CD4-positive, alpha-beta T cell (primary cell): ENCODE measurements at regions of chr17 and their contacts with region 1.

Region 1: GRCh38 chr17:76264755-76265596 is at the start of gene UBALD2:
- DNase-seq: peak; percentile 96 to 99 (median 98)
- ATAC-seq: peak; percentile 80
- H3K4me3 ChIP-seq: peak within 1 kb of the TSS; percentile 73
- H3K4me3 Mint-ChIP-seq: peak within 1 kb of the TSS; percentile 93
- H3K27ac ChIP-seq: peak within 1 kb of the TSS; percentile 77 to 91
- H3K27ac Mint-ChIP-seq: peak within 1 kb of the TSS; percentile 98
- H3K4me1 ChIP-seq: peaks cover 70% of the 10 kb centered on the region
- H3K4me1 Mint-ChIP-seq: peaks cover 64% of the 10 kb centered on the region
- H3K27me3 ChIP-seq: no peaks in the 10 kb centered on the region
- H3K27me3 Mint-ChIP-seq: no peaks in the 10 kb centered on the region
- CTCF ChIP-seq: no peak
- total RNA-seq, gene UBALD2: 253 to 265 TPM

Region 2: DNA sequence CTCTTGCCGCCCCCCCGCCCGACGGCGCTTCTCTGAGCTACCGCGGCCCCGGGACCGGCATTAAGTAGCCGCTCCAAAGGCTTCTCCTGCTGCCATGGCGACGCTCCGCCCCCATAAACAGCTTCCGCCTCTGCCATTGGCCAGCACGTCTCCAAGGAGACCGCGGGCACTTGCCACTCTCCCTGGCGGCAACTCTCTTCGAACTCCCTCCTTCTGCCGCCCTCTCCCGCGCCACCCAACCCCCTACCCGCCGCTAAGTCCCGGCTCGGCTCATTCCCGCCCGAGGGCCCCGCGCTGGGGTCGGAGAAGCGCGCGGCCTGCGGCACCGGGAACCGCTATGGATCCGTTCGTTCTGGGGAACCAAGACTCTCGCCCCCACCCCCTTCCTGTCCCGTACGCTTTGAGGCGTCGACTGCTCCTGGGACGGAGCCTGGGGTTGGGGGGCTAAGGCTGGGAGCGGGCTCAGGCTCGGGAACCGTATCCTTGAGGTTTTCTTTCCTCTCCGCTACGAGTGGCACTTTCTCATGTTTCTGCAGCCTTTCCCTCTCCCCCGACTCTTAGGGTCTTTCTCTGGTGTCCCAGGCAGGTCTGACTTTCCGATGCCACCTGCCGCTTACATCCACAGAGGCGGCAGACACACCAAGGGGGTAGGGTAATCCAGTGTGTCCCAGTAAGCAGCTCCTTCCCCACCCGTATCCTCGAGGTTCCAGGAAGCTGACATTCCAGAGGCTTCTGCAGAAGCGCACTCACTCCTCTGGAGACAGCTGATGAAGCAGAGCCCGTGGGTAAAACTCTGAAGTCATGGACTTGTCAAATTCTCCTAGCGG is 123.6 kb before region 1 on chr17 and contains the start of gene FOXJ1:
- CTCF ChIA-PET with region 1: interaction called, 4 read pairs
- POLR2A ChIA-PET with region 1: interaction called, 20 read pairs
- intact Hi-C with region 1: loop called in 1 of 2 experiments (anchors 5 kb)
- DNase-seq: peak; percentile 83 to 97 (median 92)
- ATAC-seq: peak; percentile 64
- H3K4me3 ChIP-seq: peak within 1 kb of the TSS; percentile 51
- H3K4me3 Mint-ChIP-seq: peak within 1 kb of the TSS; percentile 87
- H3K27ac ChIP-seq: no peak within 1 kb of the TSS
- H3K27ac Mint-ChIP-seq: peak within 1 kb of the TSS; percentile 97
- H3K4me1 ChIP-seq: peaks cover 68% of the 10 kb centered on the region
- H3K4me1 Mint-ChIP-seq: peaks cover 60% of the 10 kb centered on the region
- H3K27me3 ChIP-seq: peaks cover 8 to 11% of the 10 kb centered on the region in 2 experiments
- H3K27me3 Mint-ChIP-seq: peaks cover 10% of the 10 kb centered on the region
- CTCF ChIP-seq: no peak
- total RNA-seq, gene FOXJ1: 0.63 to 0.89 TPM

Region 3: GRCh38 chr17:76153640-76154039 is 111.3 kb before region 1 on chr17:
- CTCF ChIA-PET with region 1: no interaction called
- POLR2A ChIA-PET with region 1: interaction called, 13 read pairs
- intact Hi-C with region 1: no loop called
- DNase-seq: no peak
- ATAC-seq: no peak
- H3K4me3 ChIP-seq: no peak overlapping the region
- H3K4me3 Mint-ChIP-seq: peak overlapping the region; percentile 30
- H3K27ac ChIP-seq: peak overlapping the region; percentile 24 to 72
- H3K27ac Mint-ChIP-seq: peak overlapping the region; percentile 99
- H3K4me1 ChIP-seq: peaks cover 35% of the 10 kb centered on the region
- H3K4me1 Mint-ChIP-seq: peaks cover 50% of the 10 kb centered on the region
- H3K27me3 ChIP-seq: no peaks in the 10 kb centered on the region
- H3K27me3 Mint-ChIP-seq: no peaks in the 10 kb centered on the region
- CTCF ChIP-seq: no peak

Region 4: DNA sequence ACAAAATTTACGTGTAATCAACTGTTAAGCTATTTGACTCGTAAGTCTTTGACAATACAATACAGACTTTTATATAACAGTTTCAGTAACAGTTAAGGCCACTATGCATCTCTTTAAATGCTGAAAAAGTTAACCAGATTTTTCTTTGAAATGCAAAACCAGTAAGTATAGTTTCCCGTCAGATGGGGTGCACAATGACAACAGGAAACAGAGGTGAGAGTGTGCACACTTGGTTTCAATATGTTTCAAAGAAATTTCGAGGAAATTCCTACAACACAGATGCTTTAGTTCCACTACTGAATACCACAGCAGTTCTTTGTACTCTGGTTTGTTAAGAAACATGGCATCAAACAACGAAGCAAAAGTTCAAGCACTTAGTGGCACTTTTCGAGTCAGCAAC is 73.1 kb before region 1 on chr17:
- CTCF ChIA-PET with region 1: interaction called, 7 read pairs
- POLR2A ChIA-PET with region 1: interaction called, 221 read pairs
- intact Hi-C with region 1: loop called in 1 of 2 experiments (anchors 1 kb)
- DNase-seq: peak in 7 of 14 experiments; percentile 26 to 92 (median 60)
- ATAC-seq: peak; percentile 81
- H3K4me3 ChIP-seq: peak overlapping the region; percentile 11
- H3K4me3 Mint-ChIP-seq: peak overlapping the region; percentile 65
- H3K27ac ChIP-seq: peak overlapping the region; percentile 73 to 79
- H3K27ac Mint-ChIP-seq: peak overlapping the region; percentile 93
- H3K4me1 ChIP-seq: peaks cover 93% of the 10 kb centered on the region
- H3K4me1 Mint-ChIP-seq: peaks cover 72% of the 10 kb centered on the region
- H3K27me3 ChIP-seq: no peaks in the 10 kb centered on the region
- H3K27me3 Mint-ChIP-seq: no peaks in the 10 kb centered on the region
- CTCF ChIP-seq: no peak

Region 5: GRCh38 chr17:76208120-76208519 is 56.9 kb before region 1 on chr17:
- CTCF ChIA-PET with region 1: no interaction called
- POLR2A ChIA-PET with region 1: interaction called, 19 read pairs
- intact Hi-C with region 1: no loop called
- DNase-seq: peak in 3 of 14 experiments; percentile 20 to 69 (median 22)
- ATAC-seq: peak; percentile 14
- H3K4me3 ChIP-seq: no peak overlapping the region
- H3K4me3 Mint-ChIP-seq: no peak overlapping the region
- H3K27ac ChIP-seq: peak overlapping the region in 1 of 2 donors; percentile 57
- H3K27ac Mint-ChIP-seq: peak overlapping the region; percentile 47
- H3K4me1 ChIP-seq: peaks cover 48% of the 10 kb centered on the region
- H3K4me1 Mint-ChIP-seq: peaks cover 42% of the 10 kb centered on the region
- H3K27me3 ChIP-seq: no peaks in the 10 kb centered on the region
- H3K27me3 Mint-ChIP-seq: no peaks in the 10 kb centered on the region
- CTCF ChIP-seq: no peak

Region 6: GRCh38 chr17:76252040-76252954 is 12.7 kb before region 1 on chr17:
- CTCF ChIA-PET with region 1: interaction called, 3 read pairs
- POLR2A ChIA-PET with region 1: interaction called, 394 read pairs
- intact Hi-C with region 1: no loop called
- DNase-seq: peak in 7 of 14 experiments; percentile 26 to 80 (median 63)
- ATAC-seq: peak; percentile 76
- H3K4me3 ChIP-seq: peak overlapping the region; percentile 6
- H3K4me3 Mint-ChIP-seq: peak overlapping the region; percentile 79
- H3K27ac ChIP-seq: peak overlapping the region; percentile 47 to 82
- H3K27ac Mint-ChIP-seq: peak overlapping the region; percentile 87
- H3K4me1 ChIP-seq: peaks cover 68% of the 10 kb centered on the region
- H3K4me1 Mint-ChIP-seq: peaks cover 61% of the 10 kb centered on the region
- H3K27me3 ChIP-seq: no peaks in the 10 kb centered on the region
- H3K27me3 Mint-ChIP-seq: no peaks in the 10 kb centered on the region
- CTCF ChIP-seq: no peak

Region 7: GRCh38 chr17:76452660-76453430 is 187.9 kb after region 1 on chr17 and contains the start of gene UBE2O:
- CTCF ChIA-PET with region 1: no interaction called
- POLR2A ChIA-PET with region 1: no interaction called
- intact Hi-C with region 1: no loop called
- DNase-seq: peak; percentile 82 to 97 (median 92)
- ATAC-seq: peak; percentile 90
- H3K4me3 ChIP-seq: peak within 1 kb of the TSS; percentile 69
- H3K4me3 Mint-ChIP-seq: peak within 1 kb of the TSS; percentile 79
- H3K27ac ChIP-seq: peak within 1 kb of the TSS; percentile 50 to 65
- H3K27ac Mint-ChIP-seq: peak within 1 kb of the TSS; percentile 82
- H3K4me1 ChIP-seq: peaks cover 30% of the 10 kb centered on the region
- H3K4me1 Mint-ChIP-seq: peaks cover 45% of the 10 kb centered on the region
- H3K27me3 ChIP-seq: no peaks in the 10 kb centered on the region
- H3K27me3 Mint-ChIP-seq: no peaks in the 10 kb centered on the region
- CTCF ChIP-seq: peak; percentile 47
- total RNA-seq, gene UBE2O: 22.7 to 25.1 TPM